CD8-positive, alpha-beta T cell (primary cell): ENCODE measurements at regions of chr12 and their contacts with region 1.

Region 1: GRCh38 chr12:31804185-31804504 is 75.3 kb upstream of the AMN1 start:
- DNase-seq: peak in 1 of 9 experiments; percentile 16
- ATAC-seq: no peak
- H3K4me3 ChIP-seq: peak overlapping the region; percentile 33 to 56
- H3K4me3 Mint-ChIP-seq: peak overlapping the region; percentile 94
- H3K27ac ChIP-seq: peak overlapping the region; percentile 34 to 68
- H3K27ac Mint-ChIP-seq: peak overlapping the region; percentile 97
- H3K4me1 ChIP-seq: peaks cover 33% of the 10 kb centered on the region
- H3K4me1 Mint-ChIP-seq: peaks cover 55% of the 10 kb centered on the region
- H3K27me3 ChIP-seq: no peaks in the 10 kb centered on the region
- H3K27me3 Mint-ChIP-seq: no peaks in the 10 kb centered on the region
- CTCF ChIP-seq: no peak

Region 2: DNA sequence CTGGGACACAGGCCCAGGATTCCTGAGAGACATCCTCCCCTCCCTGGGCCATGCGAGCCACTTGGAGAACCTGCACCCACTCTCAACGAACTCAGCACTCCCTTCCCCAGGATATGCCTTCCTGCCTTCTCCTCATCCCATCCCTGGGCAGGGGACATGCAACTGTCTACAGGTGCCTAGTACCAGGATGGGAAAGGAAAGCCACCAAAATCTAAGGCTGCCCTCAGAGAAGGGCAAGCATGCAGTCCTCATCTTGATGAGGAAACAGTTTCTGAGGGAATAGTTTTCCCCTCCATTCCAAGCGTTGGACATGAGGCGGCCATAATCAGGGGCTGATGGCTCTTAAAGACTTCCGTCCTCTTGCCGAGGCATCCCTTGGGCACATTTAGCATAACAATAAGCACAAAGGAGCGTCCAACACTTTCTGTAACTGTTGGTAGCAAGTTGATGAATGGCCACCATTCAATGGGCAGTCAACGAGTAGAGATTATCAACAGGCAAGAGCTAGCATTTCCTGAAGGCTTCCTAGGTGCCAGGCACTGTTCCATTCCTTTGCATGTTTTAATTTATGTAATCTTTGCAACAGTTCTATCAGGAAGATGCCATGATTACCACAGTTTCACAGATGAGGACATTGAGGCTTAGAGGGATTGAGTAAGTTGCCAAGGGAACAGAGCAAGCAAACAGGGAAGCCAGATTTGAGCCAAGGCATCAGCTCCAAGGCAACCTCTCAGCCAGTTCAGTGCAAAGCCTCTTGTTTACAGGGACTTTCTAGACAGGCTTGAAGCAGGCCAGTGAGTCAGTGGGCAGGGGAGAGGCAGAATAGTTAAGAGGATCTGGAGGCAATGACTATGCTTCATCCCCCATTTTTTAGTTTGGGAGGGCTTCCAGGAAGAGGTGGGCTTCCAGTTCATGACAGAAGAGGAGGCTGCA is 583.2 kb before region 1 on chr12:
- CTCF ChIA-PET with region 1: no interaction called
- POLR2A ChIA-PET with region 1: no interaction called
- intact Hi-C with region 1: no loop called
- DNase-seq: no peak
- ATAC-seq: no peak
- H3K4me3 ChIP-seq: no peak overlapping the region
- H3K4me3 Mint-ChIP-seq: no peak overlapping the region
- H3K27ac ChIP-seq: no peak overlapping the region
- H3K27ac Mint-ChIP-seq: no peak overlapping the region
- H3K4me1 ChIP-seq: no peaks in the 10 kb centered on the region
- H3K4me1 Mint-ChIP-seq: no peaks in the 10 kb centered on the region
- H3K27me3 ChIP-seq: no peaks in the 10 kb centered on the region
- H3K27me3 Mint-ChIP-seq: peaks cover 13% of the 10 kb centered on the region
- CTCF ChIP-seq: no peak

Region 3: DNA sequence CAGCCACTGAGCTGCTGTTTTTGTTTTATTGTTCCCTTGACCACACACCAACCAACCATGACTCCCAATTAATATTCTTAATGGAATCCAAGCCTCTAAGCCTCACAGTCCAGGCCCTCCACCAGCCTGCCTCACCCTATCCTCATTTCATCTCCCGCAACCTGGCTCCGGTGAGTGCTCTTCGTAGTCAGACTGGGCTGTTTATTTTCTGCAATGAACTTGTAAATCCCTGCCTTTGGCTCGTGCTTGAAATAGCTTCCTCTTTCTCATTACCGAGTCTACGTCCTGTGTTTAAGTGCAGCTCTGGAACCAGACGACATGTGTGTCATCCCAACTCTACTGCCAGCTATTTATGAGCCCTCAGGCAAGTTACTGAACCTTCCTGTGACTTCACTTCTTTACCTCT is 157.1 kb before region 1 on chr12:
- CTCF ChIA-PET with region 1: no interaction called
- POLR2A ChIA-PET with region 1: no interaction called
- intact Hi-C with region 1: no loop called
- DNase-seq: no peak
- ATAC-seq: no peak
- H3K4me3 ChIP-seq: no peak overlapping the region
- H3K4me3 Mint-ChIP-seq: no peak overlapping the region
- H3K27ac ChIP-seq: no peak overlapping the region
- H3K27ac Mint-ChIP-seq: no peak overlapping the region
- H3K4me1 ChIP-seq: no peaks in the 10 kb centered on the region
- H3K4me1 Mint-ChIP-seq: peaks cover under 1% of the 10 kb centered on the region
- H3K27me3 ChIP-seq: no peaks in the 10 kb centered on the region
- H3K27me3 Mint-ChIP-seq: no peaks in the 10 kb centered on the region
- CTCF ChIP-seq: no peak

Region 4: DNA sequence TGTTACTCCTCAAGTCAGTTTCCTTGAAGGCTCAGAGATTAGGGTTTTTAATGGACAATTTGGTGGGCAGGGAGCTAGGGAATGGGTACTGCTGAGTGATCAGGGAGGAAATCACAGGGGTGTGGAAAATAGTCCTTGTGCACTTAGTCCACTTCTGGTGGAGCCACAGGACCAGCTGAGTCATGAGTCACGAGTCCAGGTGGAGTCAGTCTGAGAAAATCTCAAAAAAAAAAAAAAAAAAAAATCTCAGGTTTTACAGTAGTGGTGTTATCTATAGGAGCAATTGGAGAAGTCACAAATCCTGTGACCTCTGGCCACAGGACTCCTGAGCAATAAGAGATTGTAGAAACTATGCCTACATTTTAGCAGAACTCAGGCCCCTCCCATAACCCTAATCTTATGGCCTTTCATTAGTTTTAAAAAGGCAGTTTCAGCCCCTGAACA is 47.1 kb before region 1 on chr12:
- CTCF ChIA-PET with region 1: no interaction called
- POLR2A ChIA-PET with region 1: no interaction called
- intact Hi-C with region 1: loop called in 1 of 2 experiments (anchors 5 kb)
- DNase-seq: no peak
- ATAC-seq: no peak
- H3K4me3 ChIP-seq: no peak overlapping the region
- H3K4me3 Mint-ChIP-seq: no peak overlapping the region
- H3K27ac ChIP-seq: no peak overlapping the region
- H3K27ac Mint-ChIP-seq: no peak overlapping the region
- H3K4me1 ChIP-seq: no peaks in the 10 kb centered on the region
- H3K4me1 Mint-ChIP-seq: peaks cover 21% of the 10 kb centered on the region
- H3K27me3 ChIP-seq: peaks cover 0 to 2% of the 10 kb centered on the region in 2 experiments
- H3K27me3 Mint-ChIP-seq: no peaks in the 10 kb centered on the region
- CTCF ChIP-seq: no peak

Region 5: DNA sequence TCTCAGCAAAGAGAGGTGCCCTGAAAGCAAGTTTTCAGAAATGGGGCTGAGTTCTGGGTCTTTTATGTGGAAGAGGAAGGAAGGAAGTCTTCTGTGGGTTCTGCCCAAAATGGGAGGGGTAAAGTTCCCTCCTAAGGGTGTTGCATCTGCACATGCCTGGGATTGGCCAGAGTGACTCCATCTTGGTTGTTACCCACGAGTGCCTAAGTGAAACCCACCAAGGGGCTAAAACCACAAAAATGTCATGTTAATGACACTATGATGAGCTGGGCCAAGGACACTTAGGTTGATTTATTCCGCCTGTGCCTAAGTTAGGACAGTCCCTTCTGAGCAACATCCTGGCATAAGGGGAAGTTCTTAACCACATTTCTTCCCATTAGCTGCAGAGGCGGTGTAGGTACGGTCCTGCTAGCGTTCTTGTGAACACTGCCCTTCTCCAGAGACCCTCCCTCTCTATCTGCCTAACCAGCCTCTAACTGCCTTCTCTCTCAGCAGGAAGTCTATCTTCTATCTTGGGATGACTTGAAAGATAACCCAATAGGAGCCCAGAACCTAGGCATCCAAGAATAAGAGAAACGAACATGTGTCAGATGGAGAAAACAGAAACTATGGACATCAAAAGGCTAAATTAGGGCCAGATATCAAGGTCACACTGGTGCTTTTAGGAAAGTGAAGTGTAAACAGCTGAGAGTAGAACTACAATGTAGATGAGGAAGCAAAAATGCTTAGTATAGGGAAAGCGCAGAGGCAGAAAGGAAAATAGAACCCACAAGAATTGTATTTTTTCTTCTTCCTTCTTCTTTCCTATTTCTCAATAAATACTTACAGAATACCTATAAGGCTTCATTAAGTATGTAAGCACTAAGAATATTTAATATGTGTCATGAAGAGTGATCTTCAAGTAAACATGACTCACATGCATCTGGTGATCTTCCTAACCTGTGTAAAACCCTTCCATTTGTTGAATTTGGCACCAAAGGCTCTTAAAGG is 28.9 kb after region 1 on chr12:
- CTCF ChIA-PET with region 1: no interaction called
- POLR2A ChIA-PET with region 1: no interaction called
- intact Hi-C with region 1: loop called in 1 of 2 experiments (anchors 5 kb)
- DNase-seq: peak; percentile 3 to 79 (median 26)
- ATAC-seq: peak; percentile 72
- H3K4me3 ChIP-seq: peak overlapping the region in 1 of 2 experiments; percentile 1
- H3K4me3 Mint-ChIP-seq: peak overlapping the region; percentile 26
- H3K27ac ChIP-seq: peak overlapping the region in 1 of 2 experiments; percentile 72
- H3K27ac Mint-ChIP-seq: peak overlapping the region; percentile 84
- H3K4me1 ChIP-seq: peaks cover 30% of the 10 kb centered on the region
- H3K4me1 Mint-ChIP-seq: peaks cover 54% of the 10 kb centered on the region
- H3K27me3 ChIP-seq: no peaks in the 10 kb centered on the region
- H3K27me3 Mint-ChIP-seq: no peaks in the 10 kb centered on the region
- CTCF ChIP-seq: no peak